ENCODE measurements at regions of chr1 and their contacts with region 1.

Region 1: GRCh38 chr1:29033829-29034466 is 89.8 kb downstream of the TMEM200B start:
- DNase-seq: peak; percentile 24
- ATAC-seq: peak; percentile 77
- H3K4me3 ChIP-seq: no peak overlapping the region
- H3K27ac ChIP-seq: no peak overlapping the region
- H3K4me1 ChIP-seq: no peaks in the 10 kb centered on the region
- H3K27me3 ChIP-seq: no peaks in the 10 kb centered on the region
- CTCF ChIP-seq: peak; percentile 45 to 92 (median 75)
- POLR2A ChIP-seq: no peak
- RAD21 ChIP-seq: peak; percentile 96

Region 2: DNA sequence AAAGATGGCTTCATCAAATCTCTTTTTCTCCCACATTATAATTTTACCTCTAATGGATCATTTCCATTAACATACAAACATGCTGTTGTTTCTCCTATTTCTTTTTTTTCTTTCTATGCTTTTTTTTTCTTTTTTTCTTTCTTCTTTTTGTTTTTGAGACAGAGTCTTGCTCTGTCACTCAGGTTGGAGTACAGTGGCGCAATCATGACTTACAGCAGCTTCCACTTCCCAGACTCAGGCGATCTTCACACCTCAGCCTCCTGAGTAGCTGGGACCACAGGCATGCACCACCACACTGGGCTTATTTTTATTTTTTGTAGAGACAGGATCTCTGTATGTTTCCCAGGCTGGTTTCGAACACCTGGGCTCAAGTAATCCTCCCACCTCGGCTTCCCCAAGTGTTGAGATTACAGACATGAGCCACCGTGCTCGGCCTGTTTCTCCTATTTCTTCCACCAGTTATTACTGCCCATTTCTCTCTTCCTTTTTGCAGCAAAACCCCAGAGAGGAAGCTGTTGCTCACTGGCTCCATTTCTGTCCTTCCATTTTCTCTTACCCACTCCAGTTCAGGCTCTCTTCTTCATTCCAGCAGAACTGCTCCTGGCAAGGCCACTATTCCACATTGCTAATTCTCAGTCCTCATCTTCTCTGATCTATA is 254.1 kb before region 1 on chr1:
- CTCF ChIA-PET with region 1: interaction called, 3 read pairs
- POLR2A ChIA-PET with region 1: no interaction called
- RAD21 ChIA-PET with region 1: no interaction called
- intact Hi-C with region 1: loop called (anchors 2 kb)
- DNase-seq: no peak
- ATAC-seq: no peak
- H3K4me3 ChIP-seq: no peak overlapping the region
- H3K27ac ChIP-seq: no peak overlapping the region
- H3K4me1 ChIP-seq: peaks cover 0 to 3% of the 10 kb centered on the region in 2 experiments; a peak in 1 of 4 replicates
- H3K27me3 ChIP-seq: no peaks in the 10 kb centered on the region
- CTCF ChIP-seq: no peak
- POLR2A ChIP-seq: no peak
- RAD21 ChIP-seq: no peak

Region 3: DNA sequence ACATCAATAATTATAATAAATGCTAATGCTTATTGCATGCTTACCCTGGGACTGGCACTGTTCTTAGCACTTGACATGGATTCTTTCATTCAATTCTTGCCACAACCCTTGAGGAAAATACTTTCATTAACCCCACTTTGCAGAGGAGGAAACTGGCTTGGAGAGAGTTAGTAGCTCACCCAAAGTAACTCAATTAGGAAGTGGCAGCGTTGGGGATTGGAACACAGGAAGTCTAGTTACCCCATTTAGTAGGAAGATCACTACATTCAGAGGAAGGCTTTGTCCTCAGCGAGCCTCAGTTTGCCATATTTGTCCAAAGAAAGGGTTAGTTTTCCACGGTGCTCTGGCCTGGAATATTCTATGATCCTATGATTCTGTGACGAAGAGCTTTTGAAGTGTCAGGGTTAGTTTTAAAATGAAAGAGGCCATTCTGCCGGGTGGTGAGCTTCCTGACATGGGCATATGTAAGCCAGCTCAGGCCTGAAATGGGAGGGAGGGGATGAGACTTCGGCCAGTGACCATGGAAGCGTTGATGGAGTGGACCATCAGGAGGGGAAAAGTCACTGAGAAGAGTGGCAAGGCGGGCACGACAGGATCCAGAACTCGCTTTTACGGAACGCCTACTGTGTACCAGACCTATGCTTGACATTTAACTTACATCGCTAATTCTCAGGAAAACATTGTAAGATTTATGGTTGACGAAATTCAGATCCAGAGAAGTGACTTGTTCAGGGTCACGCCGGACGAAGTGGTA is 147.8 kb before region 1 on chr1:
- CTCF ChIA-PET with region 1: interaction called, 122 read pairs
- POLR2A ChIA-PET with region 1: interaction called, 11 read pairs
- RAD21 ChIA-PET with region 1: interaction called, 14 to 18 read pairs
- intact Hi-C with region 1: loop called (anchors 1 kb)
- DNase-seq: no peak
- ATAC-seq: no peak
- H3K4me3 ChIP-seq: peak overlapping the region in 1 of 2 experiments; percentile 95; a peak in 2 of 4 replicates
- H3K27ac ChIP-seq: no peak overlapping the region; the same call in 1 of the 2 replicates
- H3K4me1 ChIP-seq: peaks cover 23 to 56% of the 10 kb centered on the region in 2 experiments
- H3K27me3 ChIP-seq: no peaks in the 10 kb centered on the region
- CTCF ChIP-seq: no peak
- POLR2A ChIP-seq: no peak
- RAD21 ChIP-seq: no peak

Region 4: GRCh38 chr1:28893403-28894102 is 140.4 kb before region 1 on chr1:
- CTCF ChIA-PET with region 1: interaction called, 28 read pairs
- POLR2A ChIA-PET with region 1: no interaction called
- RAD21 ChIA-PET with region 1: interaction called in 1 of 2 experiments, 7 read pairs
- intact Hi-C with region 1: no loop called
- DNase-seq: no peak
- ATAC-seq: peak; percentile 75
- H3K4me3 ChIP-seq: no peak overlapping the region
- H3K27ac ChIP-seq: no peak overlapping the region
- H3K4me1 ChIP-seq: peaks cover 4 to 5% of the 10 kb centered on the region in 2 experiments; a peak in 2 of 4 replicates
- H3K27me3 ChIP-seq: no peaks in the 10 kb centered on the region
- CTCF ChIP-seq: peak; percentile 51 to 60 (median 59)
- POLR2A ChIP-seq: no peak
- RAD21 ChIP-seq: peak; percentile 56

Region 5: GRCh38 chr1:29202584-29203340 is 168.8 kb after region 1 on chr1:
- CTCF ChIA-PET with region 1: interaction called, 8 read pairs
- POLR2A ChIA-PET with region 1: no interaction called
- RAD21 ChIA-PET with region 1: no interaction called
- intact Hi-C with region 1: loop called (anchors 1 kb)
- DNase-seq: peak; percentile 94
- ATAC-seq: peak; percentile 96
- H3K4me3 ChIP-seq: peak overlapping the region in 1 of 2 experiments; percentile 2; a peak in 1 of 4 replicates
- H3K27ac ChIP-seq: peak overlapping the region; percentile 23; the same call in 1 of the 2 replicates
- H3K4me1 ChIP-seq: peaks cover 7 to 8% of the 10 kb centered on the region in 2 experiments
- H3K27me3 ChIP-seq: no peaks in the 10 kb centered on the region
- CTCF ChIP-seq: peak; percentile 90 to 98 (median 98)
- POLR2A ChIP-seq: no peak
- RAD21 ChIP-seq: peak; percentile 98